WTC11 (cell line): ENCODE measurements at regions of chr20 and their contacts with region 1.

Region 1: DNA sequence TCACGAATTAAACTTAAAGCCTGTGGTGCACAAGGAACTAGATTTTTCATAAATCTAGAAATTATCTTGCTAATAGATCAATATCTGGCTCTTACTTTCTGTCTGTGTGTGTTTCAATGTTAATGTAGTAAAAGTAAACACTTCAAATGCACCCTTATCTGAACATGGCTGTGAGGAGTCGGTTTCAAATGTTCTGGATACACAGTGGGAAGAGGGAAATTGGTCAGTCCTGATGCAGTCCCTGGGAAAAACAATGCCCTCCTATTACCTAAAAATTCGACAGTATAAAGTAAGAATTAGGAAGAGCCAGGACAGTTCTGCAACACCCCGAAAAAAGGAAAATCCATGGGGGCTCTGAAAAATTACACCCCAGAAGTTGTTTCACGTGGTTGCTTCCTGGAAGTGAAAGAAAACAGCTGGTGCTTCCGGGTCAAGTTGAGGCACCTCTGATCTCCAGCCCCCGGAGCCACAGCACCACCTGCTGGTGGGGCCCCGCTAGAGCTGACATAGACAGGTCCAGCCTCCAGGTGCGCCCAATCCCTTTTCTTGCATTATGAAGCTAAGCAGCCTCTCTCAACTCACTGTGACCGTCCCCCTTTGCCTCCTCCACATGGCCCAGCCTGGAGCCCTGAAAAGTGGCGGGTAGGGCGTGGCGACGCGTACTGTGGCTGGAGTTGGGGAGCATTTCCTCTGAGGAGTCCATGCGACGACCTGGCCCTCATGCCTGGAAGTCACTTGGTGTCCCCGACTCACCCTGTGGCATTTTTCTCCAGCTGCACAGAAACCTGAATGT is 8.3 kb downstream of the SEMG2 start:
- DNase-seq: peak; percentile 90
- ATAC-seq: peak; percentile 96
- H3K4me3 Mint-ChIP-seq: no peak overlapping the region
- H3K27ac Mint-ChIP-seq: no peak overlapping the region
- H3K4me1 Mint-ChIP-seq: no peaks in the 10 kb centered on the region
- H3K27me3 Mint-ChIP-seq: peaks cover 53% of the 10 kb centered on the region
- CTCF ChIP-seq: peak; percentile 85

Region 2: GRCh38 chr20:45111799-45112471 is 117.5 kb before region 1 on chr20:
- CTCF ChIA-PET with region 1: interaction called, 15 read pairs
- POLR2A ChIA-PET with region 1: no interaction called
- DNase-seq: peak; percentile 52
- ATAC-seq: peak; percentile 54
- H3K4me3 Mint-ChIP-seq: no peak overlapping the region
- H3K27ac Mint-ChIP-seq: no peak overlapping the region
- H3K4me1 Mint-ChIP-seq: peaks cover 8% of the 10 kb centered on the region; the same call in 1 of the 2 replicates
- H3K27me3 Mint-ChIP-seq: peaks cover 4% of the 10 kb centered on the region; the same call in 1 of the 2 replicates
- CTCF ChIP-seq: peak; percentile 71

Region 3: GRCh38 chr20:45218133-45218532 is 11.3 kb before region 1 on chr20:
- CTCF ChIA-PET with region 1: interaction called, 10 read pairs
- POLR2A ChIA-PET with region 1: no interaction called
- DNase-seq: no peak
- ATAC-seq: no peak
- H3K4me3 Mint-ChIP-seq: no peak overlapping the region
- H3K27ac Mint-ChIP-seq: no peak overlapping the region
- H3K4me1 Mint-ChIP-seq: no peaks in the 10 kb centered on the region
- H3K27me3 Mint-ChIP-seq: peaks cover 37% of the 10 kb centered on the region
- CTCF ChIP-seq: no peak

Region 4: GRCh38 chr20:45246109-45246508 is 16.6 kb after region 1 on chr20:
- CTCF ChIA-PET with region 1: interaction called, 13 read pairs
- POLR2A ChIA-PET with region 1: no interaction called
- DNase-seq: no peak
- ATAC-seq: no peak
- H3K4me3 Mint-ChIP-seq: no peak overlapping the region
- H3K27ac Mint-ChIP-seq: no peak overlapping the region
- H3K4me1 Mint-ChIP-seq: no peaks in the 10 kb centered on the region
- H3K27me3 Mint-ChIP-seq: peaks cover 18% of the 10 kb centered on the region
- CTCF ChIP-seq: no peak